HAP-1 (cell line): ENCODE measurements at regions of chr15 and their contacts with region 1.

Region 1: DNA sequence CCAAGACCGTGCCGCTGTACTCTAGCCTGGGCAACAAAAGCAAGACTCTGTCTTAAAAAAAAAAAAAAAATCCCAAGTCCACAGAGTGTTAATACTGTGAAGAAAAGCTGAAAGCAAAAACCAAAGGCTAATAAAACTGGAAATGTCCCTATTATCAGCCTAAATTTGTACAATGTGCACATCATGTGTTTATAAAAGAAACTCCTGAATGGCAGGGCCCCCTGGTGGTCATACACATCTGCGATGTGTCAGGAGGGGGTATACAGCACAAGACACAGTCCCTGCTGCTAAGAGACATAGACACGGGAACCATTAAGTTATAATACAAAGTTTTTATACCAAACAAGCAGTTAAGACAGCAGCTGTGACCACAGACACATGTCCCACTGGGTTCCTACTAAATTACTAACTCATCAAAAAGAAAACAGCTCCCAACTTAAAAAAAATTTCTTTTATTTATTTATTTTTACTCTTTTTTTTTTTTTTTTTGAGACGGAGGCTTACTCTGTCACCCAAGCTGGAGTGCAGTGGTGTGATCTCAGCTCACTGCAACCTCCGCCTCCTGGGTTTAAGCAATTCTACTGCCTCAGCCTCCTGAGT is 31.0 kb downstream of the IDH2 start:
- DNase-seq: peak; percentile 69 to 86
- H3K4me3 ChIP-seq: no peak overlapping the region
- H3K4me1 ChIP-seq: no peaks in the 10 kb centered on the region
- H3K27me3 ChIP-seq: no peaks in the 10 kb centered on the region

Region 2: DNA sequence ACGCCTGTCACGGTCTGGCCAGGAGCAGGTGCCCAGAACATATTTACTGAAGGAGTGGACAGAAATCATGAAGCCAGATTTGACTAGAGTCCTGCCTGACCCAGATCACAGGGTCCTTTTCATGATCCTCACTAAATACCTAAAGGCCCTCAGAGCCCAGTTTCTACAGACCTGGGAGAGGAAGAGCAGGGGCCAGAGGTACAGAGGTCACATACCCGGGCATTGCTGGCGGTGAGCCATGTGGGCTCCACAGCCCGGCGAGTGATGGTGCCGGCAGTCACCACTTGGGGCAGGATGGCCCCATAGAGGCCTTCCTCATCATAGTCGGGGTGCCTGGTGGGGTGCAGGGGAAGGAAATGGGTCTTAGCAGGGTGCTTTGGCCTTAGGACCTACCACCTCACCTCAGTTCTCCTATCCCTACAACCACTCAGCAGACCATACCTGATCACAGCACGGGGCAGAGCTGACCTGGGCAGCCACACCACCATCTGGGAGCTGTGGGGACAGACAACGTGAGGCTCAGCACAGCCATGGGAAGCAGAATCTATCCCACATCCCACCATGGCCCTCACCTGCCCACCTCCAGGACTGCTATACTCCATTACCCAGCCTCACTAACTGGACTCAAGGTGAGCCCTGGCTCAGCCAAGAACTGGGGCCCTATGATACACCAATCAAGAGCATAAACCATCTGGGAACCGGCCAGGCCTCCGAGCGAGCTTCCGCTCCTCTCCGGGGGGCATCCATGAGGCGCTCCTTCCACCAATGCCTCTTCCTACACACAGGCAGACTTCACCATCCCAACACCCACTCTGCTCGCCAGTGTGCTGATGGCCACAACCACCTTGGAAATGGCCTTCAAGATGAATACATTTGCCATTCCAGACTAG is 749.5 kb before region 1 on chr15:
- in situ Hi-C with region 1: no loop called
- DNase-seq: peak in 1 of 2 experiments; percentile 33
- H3K4me3 ChIP-seq: no peak overlapping the region
- H3K4me1 ChIP-seq: no peaks in the 10 kb centered on the region
- H3K27me3 ChIP-seq: no peaks in the 10 kb centered on the region

Region 3: GRCh38 chr15:89728254-89728653 is 343.1 kb before region 1 on chr15:
- in situ Hi-C with region 1: loop called (anchors 10 kb)
- DNase-seq: no peak
- H3K4me3 ChIP-seq: no peak overlapping the region
- H3K4me1 ChIP-seq: no peaks in the 10 kb centered on the region
- H3K27me3 ChIP-seq: 0 out of 2 replicates have a peak, but pooled peaks cover 2% of the 10 kb centered on the region

Region 4: DNA sequence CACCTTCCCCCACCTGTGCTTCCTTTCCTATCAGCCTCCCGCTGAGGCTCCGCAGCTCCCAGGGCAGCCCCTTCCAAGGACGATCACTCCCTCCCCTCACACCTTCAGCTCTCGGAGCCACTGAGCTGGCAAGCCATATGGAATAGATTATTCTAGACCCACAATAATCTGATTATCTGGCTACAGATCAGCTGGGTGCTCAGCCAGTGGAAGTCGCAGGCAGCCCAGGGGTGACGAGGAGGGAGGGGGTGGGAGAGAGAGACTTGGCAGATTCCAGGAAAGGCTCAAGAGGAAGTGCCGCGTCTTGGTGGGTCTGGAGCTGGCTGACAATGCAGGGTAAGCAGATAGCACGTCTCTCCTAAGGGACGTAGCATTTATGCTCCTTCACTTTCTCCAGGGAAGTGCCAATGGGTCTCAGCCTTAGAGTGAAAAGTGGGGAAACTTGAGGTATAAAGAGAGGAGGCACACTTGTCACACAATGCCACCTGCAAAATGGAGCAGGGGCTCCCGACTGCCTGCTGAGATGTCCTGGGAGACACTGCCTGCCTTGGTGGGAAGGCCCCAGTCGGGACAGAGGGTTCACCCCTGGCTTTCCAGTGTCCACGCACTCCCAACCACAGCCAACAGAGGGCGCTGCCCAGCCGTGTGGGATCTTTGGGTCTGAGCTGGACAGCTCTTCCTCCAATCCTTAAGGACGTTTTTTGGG is 310.9 kb before region 1 on chr15:
- in situ Hi-C with region 1: loop called (anchors 10 kb)
- DNase-seq: peak; percentile 51 to 90
- H3K4me3 ChIP-seq: no peak overlapping the region
- H3K4me1 ChIP-seq: no peaks in the 10 kb centered on the region
- H3K27me3 ChIP-seq: no peaks in the 10 kb centered on the region

Region 5: GRCh38 chr15:89863918-89864317 is 207.4 kb before region 1 on chr15:
- in situ Hi-C with region 1: no loop called
- DNase-seq: no peak
- H3K4me3 ChIP-seq: no peak overlapping the region
- H3K4me1 ChIP-seq: peaks cover 16% of the 10 kb centered on the region
- H3K27me3 ChIP-seq: no peaks in the 10 kb centered on the region

Region 6: DNA sequence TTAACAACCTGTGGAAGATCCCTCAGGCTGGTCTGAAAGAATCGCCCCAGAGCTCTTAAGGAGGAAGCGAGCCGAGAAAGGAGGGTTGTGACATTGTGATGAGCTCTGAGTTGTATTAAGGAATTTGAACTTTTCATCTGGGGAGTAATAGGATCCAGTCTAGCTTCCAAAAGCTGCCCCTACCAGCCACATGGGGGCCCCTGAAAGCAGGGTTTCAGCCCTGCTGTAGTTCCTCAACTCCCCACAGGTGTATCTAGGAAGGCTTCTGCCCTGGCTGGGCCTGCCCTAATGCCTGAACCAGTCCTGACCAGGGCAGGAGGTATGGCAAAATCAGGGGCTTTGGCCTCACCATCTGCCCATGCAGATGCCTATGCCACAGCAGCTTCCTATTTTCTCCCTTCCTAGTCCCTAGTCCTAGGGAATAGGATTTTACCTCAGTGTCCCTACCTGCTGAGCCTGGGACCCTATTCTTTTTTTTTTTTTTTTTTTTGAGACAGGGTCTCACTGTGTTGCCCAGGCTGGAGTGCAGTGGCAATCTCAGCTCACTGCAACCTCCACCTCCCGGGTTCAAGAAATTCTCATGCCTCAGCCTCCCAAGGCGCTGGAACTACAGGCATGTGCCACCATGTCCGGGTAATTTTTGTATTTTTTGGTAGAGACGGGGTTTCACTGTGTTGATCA is 172.6 kb before region 1 on chr15:
- in situ Hi-C with region 1: loop called (anchors 5 kb)
- DNase-seq: peak in 1 of 2 experiments; percentile 61
- H3K4me3 ChIP-seq: no peak overlapping the region
- H3K4me1 ChIP-seq: no peaks in the 10 kb centered on the region
- H3K27me3 ChIP-seq: no peaks in the 10 kb centered on the region

Region 7: DNA sequence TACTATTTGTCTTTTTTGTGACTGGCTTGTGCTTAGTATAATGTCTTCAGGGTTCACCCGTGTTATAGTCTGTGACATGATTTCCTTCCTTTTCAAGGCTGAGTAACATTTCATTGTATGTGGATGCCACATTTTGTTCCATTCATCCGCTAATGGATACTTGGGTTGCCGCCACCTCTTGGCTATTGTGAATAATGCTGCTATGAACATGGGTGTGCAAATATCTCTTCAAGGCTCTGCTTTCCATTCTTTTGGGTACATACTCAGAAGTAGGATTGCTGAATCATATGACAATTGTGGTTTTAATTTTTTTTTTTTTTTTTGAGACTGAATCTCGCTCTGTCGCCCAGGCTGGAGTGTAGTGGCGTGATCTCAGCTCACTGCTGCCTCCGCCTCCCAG is 473.8 kb after region 1 on chr15:
- in situ Hi-C with region 1: no loop called
- DNase-seq: no peak
- H3K4me3 ChIP-seq: no peak overlapping the region
- H3K4me1 ChIP-seq: no peaks in the 10 kb centered on the region
- H3K27me3 ChIP-seq: no peaks in the 10 kb centered on the region